Vagina (tissue), 2 donors: ENCODE measurements at regions of chr22 and their contacts with region 1.

Region 1: DNA sequence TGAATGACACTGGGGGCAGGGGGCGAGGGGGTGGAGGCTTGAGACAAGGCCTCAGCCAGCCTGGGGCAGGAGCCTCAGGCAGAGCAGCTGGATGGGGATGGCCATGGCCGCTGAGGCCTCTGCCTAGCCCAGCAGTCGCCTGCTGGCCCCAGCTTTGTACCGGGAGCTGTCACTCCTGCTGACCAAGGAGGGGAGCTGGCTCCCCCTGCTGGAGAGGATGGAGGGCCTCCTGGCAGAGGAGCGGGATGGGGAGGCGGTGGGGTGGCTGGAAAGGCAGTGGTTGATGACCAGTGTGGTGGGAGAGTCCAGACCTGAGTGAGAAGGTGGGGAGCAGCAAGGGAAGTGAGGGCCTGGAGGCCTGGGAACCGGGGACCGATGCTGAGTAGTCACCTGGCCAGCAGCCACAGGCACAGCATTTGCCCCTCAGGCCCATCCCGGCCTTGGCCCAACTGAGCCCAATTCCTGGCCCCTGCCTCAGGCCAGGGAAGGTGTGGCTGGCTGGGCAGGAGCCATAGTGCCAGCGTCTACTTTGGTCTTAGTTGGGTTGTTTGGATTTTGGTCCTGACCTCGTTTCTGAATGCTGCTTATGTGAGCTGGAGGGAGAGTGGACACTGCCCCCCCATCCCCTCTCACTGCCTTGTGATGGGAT is 6.0 kb upstream of the SUSD2 start:
- DNase-seq: no peak
- H3K4me3 ChIP-seq: no peak overlapping the region
- H3K27ac ChIP-seq: peak overlapping the region; percentile 69
- H3K4me1 ChIP-seq: peaks cover 32% of the 10 kb centered on the region
- H3K27me3 ChIP-seq: no peaks in the 10 kb centered on the region
- CTCF ChIP-seq: peak; percentile 68 to 89 (median 78)
- POLR2A ChIP-seq: no peak

Region 2: GRCh38 chr22:24106385-24107381 is 68.6 kb before region 1 on chr22:
- intact Hi-C with region 1: loop called (anchors 2 kb)
- DNase-seq: no peak
- H3K4me3 ChIP-seq: no peak overlapping the region
- H3K27ac ChIP-seq: peak overlapping the region; percentile 64
- H3K4me1 ChIP-seq: peaks cover 25% of the 10 kb centered on the region
- H3K27me3 ChIP-seq: no peaks in the 10 kb centered on the region
- CTCF ChIP-seq: no peak
- POLR2A ChIP-seq: no peak

Region 3: DNA sequence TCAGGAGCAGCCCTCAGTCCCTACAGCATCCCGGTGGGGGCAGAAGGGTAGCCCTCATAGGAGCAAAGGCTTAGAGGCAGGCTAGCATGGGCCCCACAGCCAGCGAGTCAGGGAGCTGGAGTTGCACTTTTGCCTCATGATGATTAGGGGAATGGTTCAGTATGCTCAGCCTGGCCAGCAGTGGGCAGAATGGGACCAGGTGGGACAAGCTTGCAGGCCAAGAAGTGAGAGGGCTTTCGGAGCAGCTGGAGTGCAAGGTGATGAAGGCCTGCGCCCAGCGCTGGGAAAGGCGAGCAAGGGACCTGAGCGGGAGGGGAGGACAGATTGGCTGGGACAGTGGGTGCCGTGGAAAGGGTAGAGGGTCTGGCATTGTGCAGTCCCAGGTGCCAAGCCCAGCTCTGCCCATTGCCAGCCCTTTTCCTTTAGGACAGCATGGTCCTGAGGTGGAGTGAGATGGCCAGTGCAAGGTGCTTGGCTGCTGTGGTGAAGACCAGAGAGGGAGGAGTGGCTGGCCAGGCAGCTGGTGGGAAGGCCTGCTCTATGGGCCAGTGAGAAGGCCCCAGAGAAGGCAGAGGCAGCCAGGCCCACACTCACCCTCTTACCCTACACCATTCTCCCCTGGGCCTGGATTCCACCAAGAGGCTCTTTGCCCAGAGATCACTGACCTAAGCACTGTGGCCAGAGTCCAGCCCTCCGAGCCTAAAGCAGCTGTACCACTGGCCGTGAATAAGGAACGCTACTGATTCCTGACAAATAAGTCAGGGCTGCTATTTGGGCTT is 41.9 kb before region 1 on chr22:
- intact Hi-C with region 1: no loop called
- DNase-seq: no peak
- H3K4me3 ChIP-seq: no peak overlapping the region
- H3K27ac ChIP-seq: no peak overlapping the region
- H3K4me1 ChIP-seq: peaks cover 9% of the 10 kb centered on the region
- H3K27me3 ChIP-seq: no peaks in the 10 kb centered on the region
- CTCF ChIP-seq: peak in 2 of 3 experiments; percentile 9 to 23
- POLR2A ChIP-seq: no peak